Ascending aorta (tissue), 2 donors: ENCODE measurements at regions of chr5 and their contacts with region 1.

Region 1: GRCh38 chr5:16489322-16489791 is 23.8 kb upstream of the ZNF622 start:
- DNase-seq: no peak
- H3K4me3 ChIP-seq: no peak overlapping the region
- H3K27ac ChIP-seq: no peak overlapping the region
- H3K4me1 ChIP-seq: no peaks in the 10 kb centered on the region
- H3K27me3 ChIP-seq: no peaks in the 10 kb centered on the region
- CTCF ChIP-seq: peak; percentile 51 to 63 (median 53)

Region 2: DNA sequence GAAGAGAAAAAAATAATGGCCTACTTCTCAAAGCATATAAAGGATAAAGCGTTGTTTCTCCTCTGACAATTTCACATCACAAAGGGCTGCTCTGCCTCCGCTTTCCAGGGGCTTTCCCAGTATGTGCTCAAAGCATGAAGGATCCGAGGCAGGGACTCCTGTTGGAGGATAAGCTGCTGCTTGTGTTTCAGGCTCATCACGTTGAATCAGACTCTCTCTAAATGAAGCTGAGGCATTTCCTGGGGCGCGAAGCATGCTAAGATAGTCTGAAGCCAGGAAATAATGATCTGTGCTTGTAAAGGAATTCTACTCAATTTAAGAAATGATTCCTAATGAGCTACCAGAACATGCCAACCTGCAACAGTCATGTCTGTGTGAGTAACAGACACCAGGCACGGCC is 407.3 kb before region 1 on chr5:
- intact Hi-C with region 1: no loop called
- DNase-seq: no peak
- H3K4me3 ChIP-seq: no peak overlapping the region
- H3K27ac ChIP-seq: no peak overlapping the region
- H3K4me1 ChIP-seq: no peaks in the 10 kb centered on the region
- H3K27me3 ChIP-seq: no peaks in the 10 kb centered on the region
- CTCF ChIP-seq: no peak

Region 3: GRCh38 chr5:16552666-16553343 is 63.4 kb after region 1 on chr5:
- intact Hi-C with region 1: loop called (anchors 1 kb)
- DNase-seq: peak in 1 of 2 donors; percentile 75
- H3K4me3 ChIP-seq: no peak overlapping the region
- H3K27ac ChIP-seq: no peak overlapping the region
- H3K4me1 ChIP-seq: no peaks in the 10 kb centered on the region
- H3K27me3 ChIP-seq: no peaks in the 10 kb centered on the region
- CTCF ChIP-seq: peak; percentile 27 to 62 (median 56)

Region 4: GRCh38 chr5:16666883-16667398 is 177.6 kb after region 1 on chr5:
- intact Hi-C with region 1: loop called (anchors 5 kb)
- DNase-seq: no peak
- H3K4me3 ChIP-seq: no peak overlapping the region
- H3K27ac ChIP-seq: no peak overlapping the region
- H3K4me1 ChIP-seq: no peaks in the 10 kb centered on the region
- H3K27me3 ChIP-seq: no peaks in the 10 kb centered on the region
- CTCF ChIP-seq: peak in 1 of 3 experiments; percentile 30

Region 5: DNA sequence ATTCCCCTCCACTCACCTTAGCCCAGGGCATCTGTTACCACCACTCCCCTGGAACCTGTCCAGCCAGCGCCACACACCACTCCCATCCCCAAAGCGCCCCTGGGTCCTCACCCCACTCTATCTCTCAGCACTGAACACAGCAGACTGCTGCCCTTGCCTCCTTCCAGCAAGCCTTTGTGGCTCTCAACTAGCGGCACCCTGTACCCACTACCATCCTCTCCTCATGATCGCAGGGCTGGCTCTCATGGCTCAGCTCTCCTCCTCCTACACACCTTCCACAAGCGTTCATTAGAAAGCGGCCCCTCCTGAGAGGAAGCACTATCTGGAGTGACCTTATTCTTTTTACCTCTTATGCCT is 714.8 kb after region 1 on chr5:
- intact Hi-C with region 1: loop called (anchors 5 kb)
- DNase-seq: no peak
- H3K4me3 ChIP-seq: no peak overlapping the region
- H3K27ac ChIP-seq: no peak overlapping the region
- H3K4me1 ChIP-seq: no peaks in the 10 kb centered on the region
- H3K27me3 ChIP-seq: no peaks in the 10 kb centered on the region
- CTCF ChIP-seq: no peak